Activated CD4-positive, alpha-beta memory T cell treated with anti-CD3 and anti-CD28 coated beads for 36 hours (primary cell): ENCODE measurements at regions of chr1 and their contacts with region 1.

Region 1: DNA sequence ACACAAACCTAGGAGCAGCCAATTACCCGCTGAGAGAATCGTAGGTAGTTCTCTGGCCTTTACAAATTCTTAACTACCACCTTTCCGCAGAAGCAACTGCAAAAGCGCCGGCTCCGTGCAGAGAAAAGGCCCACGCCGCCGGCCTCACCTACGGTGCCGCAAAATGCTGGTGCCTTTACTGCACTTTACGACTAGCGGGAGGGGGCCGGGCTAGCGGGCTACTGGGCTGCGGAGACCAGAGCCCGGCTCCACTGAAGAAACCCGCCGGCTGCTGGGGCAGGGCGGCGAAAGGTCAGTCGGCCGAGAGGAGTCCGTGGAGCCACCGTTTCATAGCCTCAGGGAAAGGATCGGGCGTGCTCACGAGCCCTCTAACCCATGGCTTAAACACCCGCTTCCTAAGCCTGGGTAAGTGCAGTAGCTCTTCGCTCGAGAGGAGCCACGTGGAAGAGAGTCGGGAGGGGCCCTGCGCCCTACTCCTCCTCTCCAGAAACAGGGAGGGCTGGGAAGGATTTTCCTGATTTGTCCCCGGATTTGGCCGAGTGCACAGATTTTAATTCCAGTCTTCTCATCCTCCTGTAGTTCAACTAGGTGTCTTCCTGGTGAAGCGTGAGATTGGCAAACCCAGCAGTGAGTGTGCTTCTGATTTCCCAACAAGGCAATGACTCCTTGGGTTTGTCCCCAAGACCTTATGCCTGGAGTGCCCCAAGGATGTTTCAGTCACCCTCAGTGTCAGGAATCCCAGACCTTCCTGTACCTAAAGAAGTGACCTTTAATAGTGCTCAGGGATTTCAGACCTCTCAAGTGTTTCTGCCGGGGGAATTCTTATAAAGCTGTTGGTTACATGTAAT is at the start of gene DPH5:
- DNase-seq: peak; percentile 94
- H3K4me3 Mint-ChIP-seq: peak within 1 kb of the TSS; percentile 89
- H3K27ac Mint-ChIP-seq: peak within 1 kb of the TSS; percentile 89
- H3K4me1 Mint-ChIP-seq: peaks cover 54% of the 10 kb centered on the region
- H3K27me3 Mint-ChIP-seq: no peaks in the 10 kb centered on the region
- total RNA-seq, gene DPH5: 56.5 to 59.6 TPM

Region 2: DNA sequence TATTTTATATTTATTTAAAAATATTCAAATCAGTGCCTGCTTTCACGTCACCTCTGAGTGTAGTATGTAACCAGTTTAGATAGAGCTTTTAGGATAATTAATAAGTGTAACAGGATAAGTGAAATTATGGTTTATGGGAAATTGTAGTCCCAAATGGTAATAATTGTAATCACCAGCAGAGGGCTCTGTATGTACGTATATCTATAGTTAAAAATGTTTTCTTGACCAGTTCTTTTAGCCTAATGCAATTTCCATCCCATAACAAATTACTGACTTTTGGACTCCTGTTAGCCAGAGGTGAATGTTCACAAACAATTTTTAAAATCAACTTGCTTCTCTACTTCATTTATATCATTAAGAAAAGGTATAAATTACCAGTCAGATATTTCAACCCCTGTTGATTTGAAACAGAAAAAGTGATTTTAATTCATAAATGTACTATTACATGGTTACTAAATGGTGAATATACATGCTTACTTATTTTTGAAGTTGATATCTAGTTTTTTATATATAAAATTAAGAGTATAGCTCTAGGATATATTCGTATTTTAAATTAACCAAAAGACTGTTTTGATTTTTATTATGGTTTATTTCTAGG is 104.7 kb before region 1 on chr1:
- CTCF ChIA-PET with region 1: no interaction called
- POLR2A ChIA-PET with region 1: no interaction called
- intact Hi-C with region 1: loop called (anchors 2 kb)
- DNase-seq: no peak
- H3K4me3 Mint-ChIP-seq: no peak overlapping the region
- H3K27ac Mint-ChIP-seq: peak overlapping the region; percentile 52
- H3K4me1 Mint-ChIP-seq: peaks cover 56% of the 10 kb centered on the region
- H3K27me3 Mint-ChIP-seq: no peaks in the 10 kb centered on the region

Region 3: DNA sequence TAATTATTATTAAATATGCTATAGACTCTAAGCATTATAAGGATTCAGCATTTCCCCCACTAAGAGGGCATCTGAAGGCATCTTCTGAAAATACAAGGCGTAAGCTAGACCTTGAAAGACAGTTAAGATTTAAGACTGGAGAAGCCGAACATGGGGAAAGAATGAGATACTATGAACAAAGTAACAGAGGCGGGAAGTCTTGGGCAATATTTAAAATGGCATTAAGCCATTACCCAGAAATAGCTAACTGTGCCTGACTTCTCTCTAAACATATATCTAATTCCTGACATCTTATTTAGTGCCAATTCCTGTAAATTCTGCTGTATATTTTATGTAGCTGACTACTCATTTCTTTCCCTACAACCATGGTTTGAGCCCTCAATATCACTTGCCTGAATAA is 21.2 kb before region 1 on chr1:
- CTCF ChIA-PET with region 1: no interaction called
- POLR2A ChIA-PET with region 1: interaction called, 3 read pairs
- intact Hi-C with region 1: loop called (anchors 1 kb)
- DNase-seq: no peak
- H3K4me3 Mint-ChIP-seq: no peak overlapping the region
- H3K27ac Mint-ChIP-seq: no peak overlapping the region
- H3K4me1 Mint-ChIP-seq: peaks cover 56% of the 10 kb centered on the region
- H3K27me3 Mint-ChIP-seq: no peaks in the 10 kb centered on the region

Region 4: GRCh38 chr1:101228424-101229134 is 202.7 kb after region 1 on chr1:
- CTCF ChIA-PET with region 1: no interaction called
- POLR2A ChIA-PET with region 1: no interaction called
- intact Hi-C with region 1: no loop called
- DNase-seq: no peak
- H3K4me3 Mint-ChIP-seq: no peak overlapping the region
- H3K27ac Mint-ChIP-seq: peak overlapping the region; percentile 63
- H3K4me1 Mint-ChIP-seq: peaks cover 58% of the 10 kb centered on the region
- H3K27me3 Mint-ChIP-seq: no peaks in the 10 kb centered on the region